Psoas muscle (tissue), 8 donors: ENCODE measurements at regions of chr2 and their contacts with region 1.

Region 1: GRCh38 chr2:85888684-85889626 is at the start of gene ST3GAL5:
- DNase-seq: peak; percentile 92 to 96
- ATAC-seq: peak; percentile 80 to 88 (median 86)
- H3K4me3 ChIP-seq: peak within 1 kb of the TSS; percentile 77
- H3K27ac ChIP-seq: peak within 1 kb of the TSS; percentile 96
- H3K4me1 ChIP-seq: peaks cover 32% of the 10 kb centered on the region
- H3K27me3 ChIP-seq: no peaks in the 10 kb centered on the region
- CTCF ChIP-seq: peak; percentile 61
- total RNA-seq, gene ST3GAL5: 7.9 to 19.5 (median 12.4) TPM

Region 2: GRCh38 chr2:85826990-85827878 is 61.7 kb before region 1 on chr2:
- intact Hi-C with region 1: loop called (anchors 5 kb)
- DNase-seq: peak; percentile 79 to 88
- ATAC-seq: peak; percentile 92 to 98 (median 92)
- H3K4me3 ChIP-seq: peak overlapping the region; percentile 42
- H3K27ac ChIP-seq: no peak overlapping the region
- H3K4me1 ChIP-seq: peaks cover 3% of the 10 kb centered on the region
- H3K27me3 ChIP-seq: no peaks in the 10 kb centered on the region
- CTCF ChIP-seq: peak; percentile 96

Region 3: GRCh38 chr2:85961053-85961452 is 72.1 kb after region 1 on chr2:
- intact Hi-C with region 1: no loop called
- DNase-seq: no peak
- ATAC-seq: no peak
- H3K4me3 ChIP-seq: no peak overlapping the region
- H3K27ac ChIP-seq: no peak overlapping the region
- H3K4me1 ChIP-seq: peaks cover 25% of the 10 kb centered on the region
- H3K27me3 ChIP-seq: no peaks in the 10 kb centered on the region
- CTCF ChIP-seq: no peak

Region 4: DNA sequence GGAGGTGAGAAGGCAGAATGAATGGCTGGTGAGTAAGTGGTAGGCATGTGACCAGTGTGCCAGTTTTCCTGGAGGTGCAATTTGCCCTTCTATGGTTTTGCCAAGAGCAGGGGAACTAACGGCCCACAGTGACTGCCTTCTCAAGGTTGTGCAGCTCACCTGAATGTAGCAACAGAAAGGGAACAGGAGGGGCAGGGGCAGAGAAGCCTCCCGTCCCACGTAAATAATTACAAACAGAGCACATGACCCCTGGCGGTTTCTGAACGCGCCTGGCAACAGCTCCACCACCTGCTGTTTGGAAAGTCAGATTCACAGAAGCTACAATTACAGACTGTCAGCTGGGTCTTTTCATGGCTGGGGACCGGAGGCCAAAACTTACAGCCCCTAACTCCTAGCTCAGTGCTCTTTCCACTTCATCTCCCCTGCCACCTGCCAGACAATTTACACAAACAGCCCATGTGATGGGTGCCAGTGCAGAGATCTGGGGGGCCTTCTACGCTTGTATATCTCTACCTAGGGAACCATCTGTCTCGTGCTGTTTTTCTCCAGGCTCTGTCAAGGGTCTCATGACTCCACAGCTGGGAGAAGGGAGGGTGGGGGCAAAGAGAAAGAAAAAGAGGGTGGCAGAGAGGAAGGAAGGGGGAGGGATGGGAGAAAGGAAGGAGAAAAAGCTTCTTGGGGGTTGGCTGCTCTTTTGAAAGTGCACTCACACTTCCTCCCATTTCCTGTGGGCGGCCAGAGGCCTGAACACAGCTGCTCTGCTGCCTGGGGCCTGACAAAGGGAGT is 147.1 kb after region 1 on chr2:
- intact Hi-C with region 1: loop called (anchors 2 to 5 kb)
- DNase-seq: peak; percentile 79 to 91
- ATAC-seq: peak; percentile 82 to 86 (median 84)
- H3K4me3 ChIP-seq: no peak overlapping the region
- H3K27ac ChIP-seq: peak overlapping the region; percentile 96
- H3K4me1 ChIP-seq: peaks cover 60% of the 10 kb centered on the region
- H3K27me3 ChIP-seq: no peaks in the 10 kb centered on the region
- CTCF ChIP-seq: peak; percentile 42

Region 5: GRCh38 chr2:86140969-86141392 is 252.0 kb after region 1 on chr2:
- intact Hi-C with region 1: no loop called
- DNase-seq: peak; percentile 27 to 56
- ATAC-seq: peak; percentile 85 to 92 (median 91)
- H3K4me3 ChIP-seq: no peak overlapping the region
- H3K27ac ChIP-seq: peak overlapping the region; percentile 59
- H3K4me1 ChIP-seq: no peaks in the 10 kb centered on the region
- H3K27me3 ChIP-seq: no peaks in the 10 kb centered on the region
- CTCF ChIP-seq: no peak